PC-9 (cell line): ENCODE measurements at regions of chr2 and their contacts with region 1.

Region 1: DNA sequence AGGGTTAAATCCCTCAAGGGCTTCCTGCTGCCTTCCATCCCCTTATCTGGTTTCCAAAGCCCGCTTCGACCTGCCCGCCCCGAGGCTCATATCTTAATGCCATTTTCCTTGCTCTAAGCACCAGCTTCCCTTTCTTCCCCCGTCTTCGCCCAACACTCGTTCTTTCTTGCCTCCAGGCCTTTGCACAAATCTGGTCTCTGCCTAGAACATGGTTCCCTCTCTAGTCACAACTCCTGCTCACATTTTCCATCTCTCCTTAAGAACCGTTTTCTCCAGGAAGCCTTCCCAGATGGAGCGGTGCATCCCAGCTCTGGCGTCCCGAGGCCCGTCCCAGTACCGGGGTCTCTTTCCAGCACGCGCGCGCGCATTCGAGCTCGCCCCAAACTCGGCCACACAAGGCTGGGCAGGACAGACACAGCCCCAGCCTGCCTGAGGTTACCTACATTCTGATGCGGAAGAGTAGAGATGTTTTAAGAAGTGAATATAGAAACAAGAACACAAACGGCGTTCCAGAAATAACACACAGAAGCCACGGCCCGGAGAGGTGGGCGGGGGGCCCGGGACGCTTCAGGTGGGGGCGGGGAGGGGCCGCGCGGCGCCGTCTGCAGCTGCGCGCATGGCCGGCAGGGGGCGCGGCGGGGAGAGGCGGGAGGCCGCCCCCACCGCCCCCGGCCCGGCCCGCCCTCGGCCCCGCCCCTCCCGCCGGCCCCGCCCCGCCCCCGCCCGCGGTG is at the start of gene DGKD:
- DNase-seq: peak; percentile 78 to 79
- H3K4me3 ChIP-seq: peak within 1 kb of the TSS; percentile 67
- H3K27ac ChIP-seq: peak within 1 kb of the TSS; percentile 65
- H3K4me1 ChIP-seq: peaks cover 79% of the 10 kb centered on the region
- H3K27me3 ChIP-seq: no peaks in the 10 kb centered on the region
- CTCF ChIP-seq: peak; percentile 76
- total RNA-seq, gene DGKD: 43.1 and 59.5 TPM in 2 replicates

Region 2: GRCh38 chr2:232611551-232612218 is 742.2 kb before region 1 on chr2:
- CTCF ChIA-PET with region 1: no interaction called
- POLR2A ChIA-PET with region 1: no interaction called
- intact Hi-C with region 1: loop called (anchors 5 kb)
- DNase-seq: peak; percentile 94 to 97
- H3K4me3 ChIP-seq: no peak overlapping the region
- H3K27ac ChIP-seq: peak overlapping the region; percentile 25
- H3K4me1 ChIP-seq: peaks cover 46% of the 10 kb centered on the region
- H3K27me3 ChIP-seq: no peaks in the 10 kb centered on the region
- CTCF ChIP-seq: peak; percentile 98

Region 3: GRCh38 chr2:233297076-233297475 is 56.9 kb before region 1 on chr2:
- CTCF ChIA-PET with region 1: no interaction called
- POLR2A ChIA-PET with region 1: no interaction called
- intact Hi-C with region 1: loop called (anchors 5 kb)
- DNase-seq: no peak
- H3K4me3 ChIP-seq: no peak overlapping the region
- H3K27ac ChIP-seq: no peak overlapping the region
- H3K4me1 ChIP-seq: no peaks in the 10 kb centered on the region
- H3K27me3 ChIP-seq: no peaks in the 10 kb centered on the region
- CTCF ChIP-seq: no peak

Region 4: GRCh38 chr2:233342301-233342700 is 11.6 kb before region 1 on chr2:
- CTCF ChIA-PET with region 1: interaction called, 10 read pairs
- POLR2A ChIA-PET with region 1: no interaction called
- intact Hi-C with region 1: no loop called
- DNase-seq: no peak
- H3K4me3 ChIP-seq: no peak overlapping the region
- H3K27ac ChIP-seq: no peak overlapping the region
- H3K4me1 ChIP-seq: peaks cover 23% of the 10 kb centered on the region
- H3K27me3 ChIP-seq: no peaks in the 10 kb centered on the region
- CTCF ChIP-seq: no peak

Region 5: GRCh38 chr2:233413559-233414272 is 59.8 kb after region 1 on chr2:
- CTCF ChIA-PET with region 1: no interaction called
- POLR2A ChIA-PET with region 1: interaction called, 6 read pairs
- intact Hi-C with region 1: loop called (anchors 5 kb)
- DNase-seq: peak; percentile 93
- H3K4me3 ChIP-seq: peak overlapping the region; percentile 18; the same call in 1 of the 2 replicates
- H3K27ac ChIP-seq: peak overlapping the region; percentile 88
- H3K4me1 ChIP-seq: peaks cover 38% of the 10 kb centered on the region
- H3K27me3 ChIP-seq: no peaks in the 10 kb centered on the region
- CTCF ChIP-seq: no peak

Region 6: DNA sequence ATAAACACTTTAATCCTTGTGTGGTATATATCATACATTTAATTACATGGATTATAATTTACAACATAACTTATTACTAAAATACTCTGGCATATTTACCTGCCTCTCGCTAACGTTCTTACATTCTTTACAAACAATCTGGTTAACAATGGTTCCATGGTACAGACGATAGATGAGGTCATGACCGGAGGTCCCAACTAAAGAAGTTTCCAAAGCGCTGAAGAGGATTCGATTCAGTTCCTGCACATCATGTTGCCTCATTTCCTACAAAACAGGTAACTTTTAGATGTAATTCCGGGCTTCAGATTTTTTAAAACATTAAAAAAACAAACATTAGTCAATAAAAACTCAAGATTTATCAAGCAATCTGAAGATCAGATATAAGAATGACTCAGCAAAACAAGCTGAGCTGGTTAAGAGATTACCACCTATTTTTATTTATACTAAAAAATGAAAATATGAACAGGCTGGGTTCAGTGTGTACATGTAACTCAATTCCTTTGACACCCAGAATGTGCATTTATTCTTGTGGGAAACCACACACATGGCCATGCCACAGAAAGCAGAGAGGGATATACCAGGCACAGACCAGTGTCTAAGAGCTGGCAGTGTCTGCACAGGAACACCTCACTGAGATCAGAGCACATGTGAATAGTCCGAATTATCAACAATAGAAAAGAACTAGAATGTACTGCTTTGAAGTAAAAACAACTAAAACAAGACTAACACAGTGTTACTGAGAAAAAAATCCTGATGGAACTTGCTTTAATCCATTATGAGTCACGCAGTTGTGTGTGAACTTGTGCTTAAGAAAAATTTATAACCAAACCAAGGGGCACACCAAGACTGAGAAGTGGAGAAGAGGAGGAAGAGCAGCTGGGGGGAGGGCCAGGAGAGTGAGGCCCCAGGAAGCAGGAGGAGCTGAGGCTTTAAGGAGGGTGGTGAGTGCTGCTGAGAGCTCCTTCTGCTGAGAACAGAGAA is 203.1 kb after region 1 on chr2:
- CTCF ChIA-PET with region 1: no interaction called
- POLR2A ChIA-PET with region 1: no interaction called
- intact Hi-C with region 1: loop called (anchors 10 kb)
- DNase-seq: peak; percentile 55 to 89
- H3K4me3 ChIP-seq: peak overlapping the region; percentile 25; the same call in 1 of the 2 replicates
- H3K27ac ChIP-seq: peak overlapping the region; percentile 98
- H3K4me1 ChIP-seq: peaks cover 41% of the 10 kb centered on the region
- H3K27me3 ChIP-seq: no peaks in the 10 kb centered on the region
- CTCF ChIP-seq: no peak

Region 7: DNA sequence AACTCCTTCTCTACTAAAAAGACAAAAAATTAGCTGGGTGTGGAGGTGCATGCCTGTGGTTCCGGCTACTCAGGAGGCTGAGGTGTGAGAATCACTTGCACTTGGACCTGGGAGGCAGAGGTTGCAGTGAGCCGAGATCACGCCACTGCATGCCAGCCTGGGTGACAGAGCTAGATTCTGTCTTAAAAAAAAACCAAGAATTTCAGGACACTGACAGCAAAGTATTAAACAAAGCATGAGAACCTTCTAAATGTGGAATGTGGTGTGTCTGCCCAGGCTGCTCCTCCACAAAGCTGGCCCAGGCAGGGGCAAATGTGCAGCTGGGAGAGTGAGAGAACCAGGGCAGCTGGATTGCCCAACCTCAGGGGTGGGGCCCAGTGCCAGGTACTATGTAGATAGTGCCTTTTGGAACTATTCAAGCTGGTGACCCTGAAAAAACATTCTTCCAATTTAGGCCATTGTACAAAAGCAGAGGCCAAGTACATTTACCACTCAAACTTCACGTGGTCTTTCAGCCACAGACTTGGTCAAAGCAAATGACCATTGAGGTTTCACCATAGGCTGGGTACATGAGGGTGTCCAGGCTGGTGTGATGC is 352.1 kb after region 1 on chr2:
- CTCF ChIA-PET with region 1: no interaction called
- POLR2A ChIA-PET with region 1: no interaction called
- intact Hi-C with region 1: loop called (anchors 5 kb)
- DNase-seq: peak; percentile 97
- H3K4me3 ChIP-seq: peak overlapping the region; percentile 15; the same call in 1 of the 2 replicates
- H3K27ac ChIP-seq: peak overlapping the region; percentile 95
- H3K4me1 ChIP-seq: peaks cover 97% of the 10 kb centered on the region
- H3K27me3 ChIP-seq: no peaks in the 10 kb centered on the region
- CTCF ChIP-seq: no peak